A673 (cell line): ENCODE measurements at regions of chr21 and their contacts with region 1.

Region 1: DNA sequence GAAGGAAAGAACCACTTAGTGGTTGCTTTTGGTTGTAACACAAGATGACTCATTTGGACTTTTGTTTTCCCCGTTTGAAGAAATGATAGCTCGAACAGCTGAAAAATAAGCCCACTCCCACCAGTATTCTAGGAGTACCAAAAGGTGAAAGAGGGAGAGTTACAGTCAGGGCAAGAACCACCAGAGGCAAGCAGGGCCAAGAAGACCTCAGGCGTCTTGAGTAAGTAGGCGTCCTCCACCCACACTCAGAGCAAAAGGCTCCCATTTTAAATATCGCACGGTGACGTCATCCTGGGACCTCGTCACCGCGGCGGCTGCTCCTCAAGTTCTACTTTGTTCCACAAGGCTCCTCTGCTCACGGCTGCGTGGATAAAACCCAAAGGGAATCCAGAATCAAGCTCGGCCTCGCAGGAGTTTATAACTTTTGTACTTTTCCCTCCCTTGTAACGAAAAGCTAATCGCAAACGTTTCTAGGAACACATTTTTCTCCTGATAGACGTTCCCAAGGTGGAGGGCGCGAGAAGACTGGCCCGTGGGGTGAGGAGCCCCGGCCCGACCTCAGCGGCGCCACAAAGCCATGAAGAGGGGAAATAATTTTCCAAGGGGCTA is 1.2 kb downstream of the BTG3 start:
- DNase-seq: peak; percentile 90
- H3K4me3 ChIP-seq: peak overlapping the region; percentile 89
- H3K27ac ChIP-seq: peak overlapping the region; percentile 95
- H3K4me1 ChIP-seq: peaks cover 7% of the 10 kb centered on the region
- H3K27me3 ChIP-seq: no peaks in the 10 kb centered on the region
- CTCF ChIP-seq: no peak

Region 2: GRCh38 chr21:17270229-17270628 is 341.3 kb before region 1 on chr21:
- CTCF ChIA-PET with region 1: no interaction called
- POLR2A ChIA-PET with region 1: no interaction called
- intact Hi-C with region 1: no loop called
- DNase-seq: peak; percentile 44
- H3K4me3 ChIP-seq: no peak overlapping the region
- H3K27ac ChIP-seq: no peak overlapping the region
- H3K4me1 ChIP-seq: no peaks in the 10 kb centered on the region
- H3K27me3 ChIP-seq: no peaks in the 10 kb centered on the region
- CTCF ChIP-seq: peak; percentile 34

Region 3: GRCh38 chr21:17527240-17527639 is 84.3 kb before region 1 on chr21:
- CTCF ChIA-PET with region 1: no interaction called
- POLR2A ChIA-PET with region 1: no interaction called
- intact Hi-C with region 1: no loop called
- DNase-seq: no peak
- H3K4me3 ChIP-seq: no peak overlapping the region
- H3K27ac ChIP-seq: no peak overlapping the region
- H3K4me1 ChIP-seq: no peaks in the 10 kb centered on the region
- H3K27me3 ChIP-seq: no peaks in the 10 kb centered on the region
- CTCF ChIP-seq: no peak

Region 4: GRCh38 chr21:17570786-17571185 is 40.7 kb before region 1 on chr21:
- CTCF ChIA-PET with region 1: no interaction called
- POLR2A ChIA-PET with region 1: interaction called, 16 read pairs
- intact Hi-C with region 1: no loop called
- DNase-seq: no peak
- H3K4me3 ChIP-seq: no peak overlapping the region
- H3K27ac ChIP-seq: no peak overlapping the region
- H3K4me1 ChIP-seq: no peaks in the 10 kb centered on the region
- H3K27me3 ChIP-seq: no peaks in the 10 kb centered on the region
- CTCF ChIP-seq: no peak

Region 5: DNA sequence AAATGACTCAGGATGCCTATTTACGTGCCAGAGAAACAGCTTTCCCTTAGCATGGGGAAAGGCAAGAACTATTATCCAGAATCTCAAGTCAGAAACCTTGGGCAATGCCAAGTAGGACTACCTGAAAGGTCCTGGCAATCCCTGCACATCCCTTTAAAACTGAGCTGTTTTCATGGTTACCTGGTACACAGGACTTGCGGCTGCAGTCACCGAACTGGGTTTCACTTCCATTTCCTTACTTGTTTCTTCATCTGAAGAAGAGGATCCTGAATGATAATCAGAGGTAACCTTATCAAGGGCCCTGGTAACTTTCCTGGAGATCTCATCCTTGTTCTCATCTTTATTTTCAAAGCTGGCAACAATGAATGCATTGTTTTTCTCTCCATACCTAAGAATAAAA is 13.1 kb before region 1 on chr21:
- CTCF ChIA-PET with region 1: no interaction called
- POLR2A ChIA-PET with region 1: interaction called, 11 read pairs
- intact Hi-C with region 1: no loop called
- DNase-seq: no peak
- H3K4me3 ChIP-seq: no peak overlapping the region
- H3K27ac ChIP-seq: no peak overlapping the region
- H3K4me1 ChIP-seq: no peaks in the 10 kb centered on the region
- H3K27me3 ChIP-seq: no peaks in the 10 kb centered on the region
- CTCF ChIP-seq: no peak

Region 6: GRCh38 chr21:17819114-17819876 is 207.8 kb after region 1 on chr21 and contains the start of gene C21orf91:
- CTCF ChIA-PET with region 1: no interaction called
- POLR2A ChIA-PET with region 1: no interaction called
- intact Hi-C with region 1: loop called (anchors 10 kb)
- DNase-seq: peak; percentile 95
- H3K4me3 ChIP-seq: peak within 1 kb of the TSS; percentile 82
- H3K27ac ChIP-seq: peak within 1 kb of the TSS; percentile 98
- H3K4me1 ChIP-seq: peaks cover 10% of the 10 kb centered on the region
- H3K27me3 ChIP-seq: no peaks in the 10 kb centered on the region
- CTCF ChIP-seq: no peak
- total RNA-seq, gene C21orf91: 23.5 and 24.5 TPM in 2 replicates

Region 7: GRCh38 chr21:17931080-17931479 is 319.6 kb after region 1 on chr21:
- CTCF ChIA-PET with region 1: no interaction called
- POLR2A ChIA-PET with region 1: no interaction called
- intact Hi-C with region 1: no loop called
- DNase-seq: peak; percentile 24
- H3K4me3 ChIP-seq: no peak overlapping the region
- H3K27ac ChIP-seq: no peak overlapping the region
- H3K4me1 ChIP-seq: no peaks in the 10 kb centered on the region
- H3K27me3 ChIP-seq: no peaks in the 10 kb centered on the region
- CTCF ChIP-seq: peak; percentile 39